ENCODE measurements at regions of chr6 and their contacts with region 1.

Region 1: DNA sequence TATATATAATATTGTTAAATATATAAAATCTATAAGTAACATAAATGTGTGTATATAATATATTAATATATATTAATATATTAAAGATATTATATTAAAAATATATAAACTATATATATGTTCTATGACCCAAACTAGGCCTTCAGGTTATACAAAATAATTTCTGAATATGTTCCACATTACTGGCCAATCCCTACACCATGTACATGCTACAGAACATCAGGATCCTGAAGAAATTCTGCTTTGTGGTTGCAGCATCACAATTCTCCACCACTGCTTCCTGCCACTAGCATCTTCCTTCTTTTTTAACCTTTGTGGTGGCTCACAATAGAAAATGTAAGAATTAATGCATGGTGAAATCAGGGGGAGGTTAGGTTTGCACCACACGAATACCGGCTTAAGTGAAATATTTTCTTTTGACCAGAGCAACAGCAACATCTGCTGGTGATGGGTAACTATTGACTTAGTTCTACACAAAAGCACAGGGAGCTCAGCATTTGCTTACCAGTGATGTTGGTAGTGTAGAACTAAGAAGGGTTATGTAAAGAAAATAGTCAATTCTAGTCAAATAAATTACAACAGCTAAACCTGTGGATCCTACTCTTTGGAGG is 280.6 kb downstream of the SYNE1 start:
- DNase-seq: peak in 4 of 14 experiments; percentile 14 to 59 (median 47)
- ATAC-seq: peak; percentile 69
- H3K4me3 ChIP-seq: no peak overlapping the region
- H3K4me3 Mint-ChIP-seq: no peak overlapping the region
- H3K27ac ChIP-seq: no peak overlapping the region
- H3K27ac Mint-ChIP-seq: no peak overlapping the region
- H3K4me1 ChIP-seq: no peaks in the 10 kb centered on the region
- H3K4me1 Mint-ChIP-seq: peaks cover 4% of the 10 kb centered on the region
- H3K27me3 ChIP-seq: no peaks in the 10 kb centered on the region
- H3K27me3 Mint-ChIP-seq: no peaks in the 10 kb centered on the region
- CTCF ChIP-seq: peak; percentile 44

Region 2: GRCh38 chr6:151765444-151765886 is 591.1 kb before region 1 on chr6:
- CTCF ChIA-PET with region 1: no interaction called
- POLR2A ChIA-PET with region 1: no interaction called
- intact Hi-C with region 1: loop called in 1 of 2 experiments (anchors 10 kb)
- DNase-seq: peak in 6 of 14 experiments; percentile 10 to 65 (median 50)
- ATAC-seq: peak; percentile 56
- H3K4me3 ChIP-seq: no peak overlapping the region
- H3K4me3 Mint-ChIP-seq: no peak overlapping the region
- H3K27ac ChIP-seq: no peak overlapping the region
- H3K27ac Mint-ChIP-seq: no peak overlapping the region
- H3K4me1 ChIP-seq: no peaks in the 10 kb centered on the region
- H3K4me1 Mint-ChIP-seq: peaks cover 24% of the 10 kb centered on the region
- H3K27me3 ChIP-seq: no peaks in the 10 kb centered on the region
- H3K27me3 Mint-ChIP-seq: peaks cover 15% of the 10 kb centered on the region
- CTCF ChIP-seq: peak; percentile 72

Region 3: GRCh38 chr6:152206072-152206818 is 150.3 kb before region 1 on chr6:
- CTCF ChIA-PET with region 1: no interaction called
- POLR2A ChIA-PET with region 1: no interaction called
- intact Hi-C with region 1: loop called (anchors 5 kb)
- DNase-seq: peak in 13 of 14 experiments; percentile 23 to 72 (median 43)
- ATAC-seq: peak; percentile 54
- H3K4me3 ChIP-seq: no peak overlapping the region
- H3K4me3 Mint-ChIP-seq: no peak overlapping the region
- H3K27ac ChIP-seq: no peak overlapping the region
- H3K27ac Mint-ChIP-seq: no peak overlapping the region
- H3K4me1 ChIP-seq: no peaks in the 10 kb centered on the region
- H3K4me1 Mint-ChIP-seq: peaks cover 10% of the 10 kb centered on the region
- H3K27me3 ChIP-seq: no peaks in the 10 kb centered on the region
- H3K27me3 Mint-ChIP-seq: no peaks in the 10 kb centered on the region
- CTCF ChIP-seq: peak; percentile 65

Region 4: DNA sequence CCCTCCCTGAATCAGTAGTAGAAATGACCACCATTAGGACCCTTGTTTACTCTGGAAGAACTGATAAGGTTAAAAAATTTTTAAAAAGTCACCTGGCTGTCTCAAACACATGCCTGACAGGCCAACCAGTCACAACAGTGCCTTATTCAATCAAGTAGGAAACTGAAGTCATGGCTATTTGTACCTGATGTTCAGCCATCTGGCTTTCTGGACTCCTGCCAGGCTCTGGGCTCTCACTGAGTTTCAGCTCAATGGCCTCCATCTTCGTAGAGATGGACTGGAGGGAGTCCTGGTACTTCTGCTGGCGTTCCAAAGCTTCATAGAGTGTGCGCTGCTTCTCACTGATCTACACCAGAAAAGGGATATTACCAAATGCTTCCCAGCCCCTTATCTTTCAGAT is 63.2 kb before region 1 on chr6:
- CTCF ChIA-PET with region 1: no interaction called
- POLR2A ChIA-PET with region 1: no interaction called
- intact Hi-C with region 1: no loop called
- DNase-seq: no peak
- ATAC-seq: no peak
- H3K4me3 ChIP-seq: no peak overlapping the region
- H3K4me3 Mint-ChIP-seq: no peak overlapping the region
- H3K27ac ChIP-seq: no peak overlapping the region
- H3K27ac Mint-ChIP-seq: peak overlapping the region; percentile 24
- H3K4me1 ChIP-seq: peaks cover 3% of the 10 kb centered on the region
- H3K4me1 Mint-ChIP-seq: peaks cover 22% of the 10 kb centered on the region
- H3K27me3 ChIP-seq: no peaks in the 10 kb centered on the region
- H3K27me3 Mint-ChIP-seq: no peaks in the 10 kb centered on the region
- CTCF ChIP-seq: no peak

Region 5: DNA sequence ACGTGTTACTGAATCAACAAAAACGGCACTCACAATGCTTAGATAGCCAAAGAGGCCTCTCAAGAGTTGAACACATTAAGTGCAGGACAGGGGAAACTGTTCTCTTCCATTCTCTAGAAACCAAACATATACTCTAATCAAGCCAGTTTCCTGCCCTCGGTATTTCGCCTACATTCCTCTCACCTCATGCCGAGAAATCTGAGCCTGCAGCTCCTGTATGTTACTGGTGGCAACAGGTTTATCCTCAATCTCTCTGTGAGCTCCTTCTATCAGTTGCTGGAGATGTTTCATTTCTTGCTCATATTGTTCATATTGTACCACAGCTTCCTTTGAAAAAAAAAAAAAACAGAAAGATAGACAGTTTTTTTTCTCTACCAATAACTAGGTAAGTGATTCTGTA is 48.2 kb before region 1 on chr6:
- CTCF ChIA-PET with region 1: no interaction called
- POLR2A ChIA-PET with region 1: no interaction called
- intact Hi-C with region 1: no loop called
- DNase-seq: no peak
- ATAC-seq: no peak
- H3K4me3 ChIP-seq: no peak overlapping the region
- H3K4me3 Mint-ChIP-seq: no peak overlapping the region
- H3K27ac ChIP-seq: no peak overlapping the region
- H3K27ac Mint-ChIP-seq: no peak overlapping the region
- H3K4me1 ChIP-seq: peaks cover 16% of the 10 kb centered on the region
- H3K4me1 Mint-ChIP-seq: peaks cover 36% of the 10 kb centered on the region
- H3K27me3 ChIP-seq: no peaks in the 10 kb centered on the region
- H3K27me3 Mint-ChIP-seq: no peaks in the 10 kb centered on the region
- CTCF ChIP-seq: no peak